Caco-2 (cell line): ENCODE measurements at regions of chr3 and their contacts with region 1.

Region 1: GRCh38 chr3:149536429-149536828 is 61.9 kb downstream of the TM4SF4 start:
- DNase-seq: peak in 1 of 2 experiments; percentile 10
- H3K4me3 ChIP-seq: no peak overlapping the region
- H3K4me3 Mint-ChIP-seq: no peak overlapping the region
- H3K27ac Mint-ChIP-seq: peak overlapping the region; percentile 43
- H3K4me1 ChIP-seq: peaks cover 41% of the 10 kb centered on the region
- H3K4me1 Mint-ChIP-seq: peaks cover 25% of the 10 kb centered on the region
- H3K27me3 ChIP-seq: no peaks in the 10 kb centered on the region
- H3K27me3 Mint-ChIP-seq: no peaks in the 10 kb centered on the region
- CTCF ChIP-seq: no peak

Region 2: GRCh38 chr3:149330609-149331331 is 205.7 kb before region 1 on chr3:
- CTCF ChIA-PET with region 1: no interaction called
- POLR2A ChIA-PET with region 1: no interaction called
- intact Hi-C with region 1: no loop called
- DNase-seq: no peak
- H3K4me3 ChIP-seq: no peak overlapping the region
- H3K4me3 Mint-ChIP-seq: no peak overlapping the region
- H3K27ac Mint-ChIP-seq: no peak overlapping the region
- H3K4me1 ChIP-seq: no peaks in the 10 kb centered on the region
- H3K4me1 Mint-ChIP-seq: no peaks in the 10 kb centered on the region
- H3K27me3 ChIP-seq: no peaks in the 10 kb centered on the region
- H3K27me3 Mint-ChIP-seq: no peaks in the 10 kb centered on the region
- CTCF ChIP-seq: no peak

Region 3: GRCh38 chr3:149494022-149494758 is 42.2 kb before region 1 on chr3:
- CTCF ChIA-PET with region 1: no interaction called
- POLR2A ChIA-PET with region 1: no interaction called
- intact Hi-C with region 1: loop called (anchors 2 kb)
- DNase-seq: peak; percentile 53 to 76
- H3K4me3 ChIP-seq: no peak overlapping the region
- H3K4me3 Mint-ChIP-seq: no peak overlapping the region
- H3K27ac Mint-ChIP-seq: no peak overlapping the region
- H3K4me1 ChIP-seq: no peaks in the 10 kb centered on the region
- H3K4me1 Mint-ChIP-seq: no peaks in the 10 kb centered on the region
- H3K27me3 ChIP-seq: no peaks in the 10 kb centered on the region
- H3K27me3 Mint-ChIP-seq: no peaks in the 10 kb centered on the region
- CTCF ChIP-seq: peak; percentile 65 to 71

Region 4: DNA sequence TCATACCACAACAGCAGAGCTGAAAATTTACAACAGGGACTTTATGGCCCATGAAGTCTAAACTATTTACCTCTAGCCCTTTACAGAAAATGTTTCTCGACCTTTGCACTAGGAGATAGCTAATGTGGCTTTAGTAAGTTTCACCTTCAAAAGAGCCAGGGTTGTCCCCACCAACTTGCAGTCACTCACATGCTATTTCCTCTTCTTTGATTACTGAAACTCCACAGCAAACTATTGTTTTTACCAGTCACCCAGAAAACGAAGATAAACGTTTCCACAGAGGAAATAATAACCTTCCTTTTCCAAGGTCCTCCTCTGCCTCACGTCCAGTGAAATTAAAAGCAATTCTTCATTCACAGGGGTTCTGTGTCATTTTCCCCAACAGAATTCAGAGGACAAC is 73.2 kb after region 1 on chr3:
- CTCF ChIA-PET with region 1: no interaction called
- POLR2A ChIA-PET with region 1: no interaction called
- intact Hi-C with region 1: loop called (anchors 5 kb)
- DNase-seq: peak in 1 of 2 experiments; percentile 28
- H3K4me3 ChIP-seq: no peak overlapping the region
- H3K4me3 Mint-ChIP-seq: peak overlapping the region; percentile 33
- H3K27ac Mint-ChIP-seq: no peak overlapping the region
- H3K4me1 ChIP-seq: peaks cover 48% of the 10 kb centered on the region
- H3K4me1 Mint-ChIP-seq: peaks cover 26% of the 10 kb centered on the region
- H3K27me3 ChIP-seq: no peaks in the 10 kb centered on the region
- H3K27me3 Mint-ChIP-seq: no peaks in the 10 kb centered on the region
- CTCF ChIP-seq: no peak

Region 5: GRCh38 chr3:149657926-149658733 is 121.7 kb after region 1 on chr3 and contains the start of gene WWTR1:
- CTCF ChIA-PET with region 1: no interaction called
- POLR2A ChIA-PET with region 1: interaction called, 6 read pairs
- intact Hi-C with region 1: loop called (anchors 5 kb)
- DNase-seq: peak; percentile 80 to 87
- H3K4me3 ChIP-seq: peak within 1 kb of the TSS; percentile 37
- H3K4me3 Mint-ChIP-seq: peak within 1 kb of the TSS; percentile 78
- H3K27ac Mint-ChIP-seq: peak within 1 kb of the TSS; percentile 87
- H3K4me1 ChIP-seq: peaks cover 14% of the 10 kb centered on the region
- H3K4me1 Mint-ChIP-seq: peaks cover 17% of the 10 kb centered on the region
- H3K27me3 ChIP-seq: no peaks in the 10 kb centered on the region; the same call in 1 of the 2 replicates
- H3K27me3 Mint-ChIP-seq: no peaks in the 10 kb centered on the region
- CTCF ChIP-seq: no peak
- total RNA-seq, gene WWTR1: 16.2 and 19.1 TPM in 2 replicates

Region 6: DNA sequence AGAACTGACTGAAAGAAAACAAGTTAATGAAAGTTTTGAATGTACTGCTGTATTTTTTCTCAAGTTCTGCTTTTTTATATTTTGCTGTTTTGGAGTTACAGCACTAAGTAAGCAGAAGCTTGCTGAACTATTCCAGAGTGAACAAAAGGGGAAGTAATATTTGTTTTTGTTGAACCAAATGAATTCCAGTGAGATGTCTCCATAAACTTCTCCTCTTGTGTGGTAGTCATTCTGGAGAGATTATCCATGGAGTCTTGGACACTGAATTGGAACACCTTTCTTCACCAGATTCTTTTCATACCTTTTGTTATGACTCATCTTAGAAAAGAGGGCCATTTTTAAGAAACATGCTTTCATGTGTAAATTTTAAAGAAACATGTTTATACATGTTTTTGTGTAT is 247.1 kb after region 1 on chr3:
- CTCF ChIA-PET with region 1: no interaction called
- POLR2A ChIA-PET with region 1: no interaction called
- intact Hi-C with region 1: no loop called
- DNase-seq: no peak
- H3K4me3 ChIP-seq: no peak overlapping the region
- H3K4me3 Mint-ChIP-seq: peak overlapping the region; percentile 36
- H3K27ac Mint-ChIP-seq: peak overlapping the region; percentile 91
- H3K4me1 ChIP-seq: peaks cover 20% of the 10 kb centered on the region
- H3K4me1 Mint-ChIP-seq: peaks cover 24% of the 10 kb centered on the region
- H3K27me3 ChIP-seq: no peaks in the 10 kb centered on the region
- H3K27me3 Mint-ChIP-seq: no peaks in the 10 kb centered on the region
- CTCF ChIP-seq: no peak